Endothelial cell of umbilical vein (primary cell): ENCODE measurements at regions of chr4 and their contacts with region 1.

Region 1: DNA sequence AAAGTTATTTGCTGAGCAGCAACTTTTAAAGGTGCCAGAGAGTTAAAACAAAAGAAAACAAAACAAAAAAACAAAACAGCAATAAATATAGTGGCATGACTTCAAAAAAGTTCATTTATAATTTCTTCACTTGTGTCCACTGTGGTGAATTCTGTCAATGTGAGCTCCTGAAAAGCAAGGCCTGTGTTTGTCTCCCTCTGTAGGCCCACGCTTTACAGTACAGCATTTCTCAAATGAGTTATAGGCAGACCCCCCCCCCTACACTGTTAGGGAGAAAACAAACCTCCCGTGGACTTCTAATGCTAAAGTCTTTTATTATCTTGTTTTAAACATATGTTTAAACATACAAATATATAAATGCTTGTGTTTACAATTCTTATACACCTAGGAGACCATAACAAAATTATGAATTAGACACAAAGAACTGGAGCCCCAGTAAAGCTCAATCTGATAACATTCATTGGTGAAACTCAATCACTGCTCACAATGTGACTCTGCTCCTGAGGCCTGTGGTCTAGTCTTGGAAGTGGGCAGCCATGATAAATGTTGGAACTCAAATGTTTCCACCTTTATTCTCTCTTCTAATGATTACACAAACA is 47.0 kb upstream of the SCOC start:
- DNase-seq: peak; percentile 68
- H3K4me3 ChIP-seq: no peak overlapping the region
- H3K27ac ChIP-seq: no peak overlapping the region
- H3K4me1 ChIP-seq: no peaks in the 10 kb centered on the region
- H3K27me3 ChIP-seq: peaks cover 4 to 6% of the 10 kb centered on the region in 2 experiments
- CTCF ChIP-seq: peak; percentile 69
- POLR2A ChIP-seq: no peak

Region 2: GRCh38 chr4:139656614-139657486 is 669.6 kb before region 1 on chr4:
- CTCF ChIA-PET with region 1: interaction called, 14 read pairs
- POLR2A ChIA-PET with region 1: no interaction called
- dilution Hi-C with region 1: no loop called
- intact Hi-C with region 1: loop called (anchors 2 kb)
- DNase-seq: peak; percentile 76
- H3K4me3 ChIP-seq: peak overlapping the region in 1 of 3 experiments; percentile 30
- H3K27ac ChIP-seq: peak overlapping the region; percentile 94
- H3K4me1 ChIP-seq: peaks cover 45% of the 10 kb centered on the region
- H3K27me3 ChIP-seq: no peaks in the 10 kb centered on the region
- CTCF ChIP-seq: peak; percentile 83 to 86
- POLR2A ChIP-seq: no peak

Region 3: DNA sequence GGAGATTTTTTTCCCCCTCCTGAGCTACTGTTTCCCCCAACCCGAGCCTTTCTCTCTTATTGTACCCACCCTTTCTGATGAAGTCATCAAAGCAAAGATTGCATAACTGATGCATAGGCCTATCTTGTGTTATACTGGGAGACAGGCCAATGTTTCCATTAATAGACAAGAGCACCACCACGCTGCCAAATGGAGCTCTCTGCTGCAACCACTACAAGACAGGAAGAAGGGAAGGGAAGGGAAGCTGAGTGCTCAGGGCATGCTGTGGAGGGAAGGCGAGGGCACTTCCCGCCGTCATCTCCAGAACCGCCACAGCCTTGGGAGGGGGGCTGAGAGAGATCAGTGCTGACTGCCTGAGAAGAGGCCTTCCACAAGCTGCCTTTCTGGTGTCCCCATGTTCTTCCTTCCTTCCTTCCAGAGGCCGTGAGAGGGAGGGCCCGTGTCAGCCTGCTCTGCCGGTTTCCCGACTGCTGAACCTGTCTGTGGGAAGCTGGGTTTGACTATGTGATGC is 585.9 kb before region 1 on chr4:
- CTCF ChIA-PET with region 1: interaction called, 11 read pairs
- POLR2A ChIA-PET with region 1: no interaction called
- dilution Hi-C with region 1: no loop called
- intact Hi-C with region 1: loop called (anchors 1 kb)
- DNase-seq: peak; percentile 92
- H3K4me3 ChIP-seq: no peak overlapping the region
- H3K27ac ChIP-seq: peak overlapping the region; percentile 42
- H3K4me1 ChIP-seq: peaks cover 15% of the 10 kb centered on the region
- H3K27me3 ChIP-seq: no peaks in the 10 kb centered on the region
- CTCF ChIP-seq: no peak
- POLR2A ChIP-seq: no peak

Region 4: GRCh38 chr4:140049024-140049848 is 277.3 kb before region 1 on chr4:
- CTCF ChIA-PET with region 1: interaction called, 18 read pairs
- POLR2A ChIA-PET with region 1: no interaction called
- dilution Hi-C with region 1: no loop called
- intact Hi-C with region 1: no loop called
- DNase-seq: peak; percentile 85
- H3K4me3 ChIP-seq: peak overlapping the region; percentile 0 to 24 (median 5)
- H3K27ac ChIP-seq: peak overlapping the region; percentile 80
- H3K4me1 ChIP-seq: peaks cover 49% of the 10 kb centered on the region
- H3K27me3 ChIP-seq: no peaks in the 10 kb centered on the region
- CTCF ChIP-seq: no peak
- POLR2A ChIP-seq: no peak

Region 5: DNA sequence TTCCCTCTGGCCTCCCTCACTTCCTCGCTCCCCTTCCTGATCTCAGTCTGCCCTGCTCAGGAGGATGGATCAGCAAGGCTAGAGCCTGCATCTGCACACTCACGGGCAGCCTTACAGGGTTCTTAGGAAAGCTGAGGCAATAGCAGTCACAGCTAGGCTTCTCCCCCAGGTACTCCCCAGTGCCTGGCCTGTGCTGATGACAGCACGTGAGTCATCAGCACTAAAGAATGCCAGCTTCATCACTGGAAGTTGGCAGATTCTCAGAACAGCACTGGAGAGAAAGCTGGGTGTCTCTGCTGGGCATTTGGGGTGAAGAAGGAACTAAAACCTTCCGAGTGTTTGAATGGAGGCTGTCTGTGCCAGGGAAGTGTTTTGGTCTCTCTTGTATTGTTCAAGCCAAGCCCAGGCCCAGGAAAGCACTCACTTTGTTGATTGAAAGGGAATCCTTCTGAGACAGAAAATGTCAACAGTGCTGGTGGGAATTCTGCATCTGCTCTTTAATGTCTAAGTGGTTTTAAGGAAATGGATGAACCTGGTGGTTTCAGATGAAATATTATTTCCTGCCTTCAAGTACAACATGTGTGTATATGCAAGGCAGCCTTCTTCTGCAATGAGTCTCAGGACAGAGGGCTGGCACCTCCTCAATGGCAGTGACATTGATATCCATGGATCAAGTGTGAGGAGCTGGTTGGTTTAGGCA is 26.1 kb before region 1 on chr4:
- CTCF ChIA-PET with region 1: interaction called, 12 read pairs
- POLR2A ChIA-PET with region 1: no interaction called
- dilution Hi-C with region 1: no loop called
- intact Hi-C with region 1: no loop called
- DNase-seq: peak; percentile 29
- H3K4me3 ChIP-seq: no peak overlapping the region
- H3K27ac ChIP-seq: no peak overlapping the region
- H3K4me1 ChIP-seq: peaks cover 10% of the 10 kb centered on the region
- H3K27me3 ChIP-seq: peaks cover 10 to 19% of the 10 kb centered on the region in 2 experiments
- CTCF ChIP-seq: no peak
- POLR2A ChIP-seq: no peak

Region 6: GRCh38 chr4:140351093-140352075 is 24.9 kb after region 1 on chr4:
- CTCF ChIA-PET with region 1: interaction called, 10 read pairs
- POLR2A ChIA-PET with region 1: no interaction called
- dilution Hi-C with region 1: no loop called
- intact Hi-C with region 1: no loop called
- DNase-seq: no peak
- H3K4me3 ChIP-seq: no peak overlapping the region
- H3K27ac ChIP-seq: no peak overlapping the region
- H3K4me1 ChIP-seq: no peaks in the 10 kb centered on the region
- H3K27me3 ChIP-seq: peaks cover 10 to 11% of the 10 kb centered on the region in 2 experiments
- CTCF ChIP-seq: no peak
- POLR2A ChIP-seq: no peak

Region 7: DNA sequence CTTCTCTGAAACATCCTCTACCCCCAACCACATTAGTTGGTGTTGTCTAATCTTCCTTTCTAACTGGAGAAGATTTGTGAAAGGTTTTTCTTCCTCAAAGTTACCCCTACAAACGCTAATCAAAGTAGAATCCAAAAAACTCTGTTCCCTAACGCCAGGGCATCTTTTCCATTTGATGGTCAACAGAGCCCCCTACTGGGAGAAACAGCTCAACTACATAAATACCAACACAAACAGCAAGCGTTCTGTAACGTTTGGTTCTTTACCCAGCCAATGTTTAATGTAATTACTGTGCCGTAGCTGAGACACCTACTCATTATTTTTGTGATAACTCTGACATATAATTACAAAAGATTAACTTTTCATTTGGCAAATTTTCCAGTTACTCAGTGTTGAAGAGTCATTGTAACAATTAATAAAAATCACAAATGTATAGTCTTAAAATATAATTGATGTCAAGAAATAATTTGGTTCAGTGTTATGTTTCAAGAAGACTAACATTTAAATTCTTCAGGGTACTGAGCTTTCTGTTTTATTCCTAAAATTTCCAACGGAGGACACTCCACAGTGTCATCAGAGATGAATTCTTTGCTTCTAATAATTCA is 524.6 kb after region 1 on chr4:
- CTCF ChIA-PET with region 1: interaction called, 41 read pairs
- POLR2A ChIA-PET with region 1: no interaction called
- dilution Hi-C with region 1: no loop called
- intact Hi-C with region 1: no loop called
- DNase-seq: peak; percentile 69
- H3K4me3 ChIP-seq: no peak overlapping the region
- H3K27ac ChIP-seq: no peak overlapping the region
- H3K4me1 ChIP-seq: no peaks in the 10 kb centered on the region
- H3K27me3 ChIP-seq: peaks cover 2 to 9% of the 10 kb centered on the region in 2 experiments
- CTCF ChIP-seq: peak; percentile 65 to 69
- POLR2A ChIP-seq: no peak

Region 8: GRCh38 chr4:141435446-141436225 is 1109.1 kb after region 1 on chr4:
- CTCF ChIA-PET with region 1: no interaction called
- POLR2A ChIA-PET with region 1: no interaction called
- dilution Hi-C with region 1: no loop called
- intact Hi-C with region 1: no loop called
- DNase-seq: no peak
- H3K4me3 ChIP-seq: no peak overlapping the region
- H3K27ac ChIP-seq: no peak overlapping the region
- H3K4me1 ChIP-seq: no peaks in the 10 kb centered on the region
- H3K27me3 ChIP-seq: no peaks in the 10 kb centered on the region
- CTCF ChIP-seq: no peak
- POLR2A ChIP-seq: no peak